Posterior cingulate gyrus (tissue), 11 donors: ENCODE measurements at regions of chr4 and their contacts with region 1.

Region 1: DNA sequence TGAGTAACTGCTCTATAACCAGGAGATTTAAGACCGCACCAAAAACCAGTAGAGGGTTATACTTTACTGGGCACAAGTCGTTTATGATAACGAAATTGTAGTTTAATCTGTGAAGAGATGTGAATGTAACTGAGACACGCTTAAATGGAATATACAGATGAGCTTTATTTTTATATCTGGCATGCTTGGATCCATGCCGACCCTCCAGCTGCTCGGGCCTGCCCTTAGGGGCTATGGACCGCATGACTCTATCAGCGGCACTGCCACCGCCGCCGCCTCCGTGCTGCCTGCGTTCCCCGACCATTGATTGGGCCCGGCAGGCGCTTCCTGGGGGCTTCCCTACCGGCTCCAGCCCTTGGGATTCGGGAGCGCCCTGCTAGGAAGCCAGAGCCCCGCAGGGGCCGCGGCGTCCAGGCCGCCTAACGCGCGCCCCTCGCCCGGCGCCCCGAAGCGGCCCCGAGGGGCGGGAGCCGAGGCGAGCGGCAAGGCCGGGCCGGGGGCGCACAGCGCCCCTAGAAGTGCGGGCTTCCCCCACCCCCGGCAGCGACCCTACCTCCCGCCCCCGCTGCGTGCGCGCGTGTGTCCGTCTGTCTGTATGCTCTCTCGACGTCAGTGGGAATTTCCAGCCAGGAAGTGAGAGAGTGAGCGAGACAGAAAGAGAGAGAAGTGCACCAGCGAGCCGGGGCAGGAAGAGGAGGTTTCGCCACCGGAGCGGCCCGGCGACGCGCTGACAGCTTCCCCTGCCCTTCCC is at the start of gene NFKB1:
- DNase-seq: peak in 9 of 10 donors; percentile 23 to 88 (median 58)

Region 2: GRCh38 chr4:102169345-102169744 is 331.5 kb before region 1 on chr4:
- intact Hi-C with region 1: no loop called
- DNase-seq: peak in 3 of 10 donors; percentile 17 to 87 (median 30)

Region 3: DNA sequence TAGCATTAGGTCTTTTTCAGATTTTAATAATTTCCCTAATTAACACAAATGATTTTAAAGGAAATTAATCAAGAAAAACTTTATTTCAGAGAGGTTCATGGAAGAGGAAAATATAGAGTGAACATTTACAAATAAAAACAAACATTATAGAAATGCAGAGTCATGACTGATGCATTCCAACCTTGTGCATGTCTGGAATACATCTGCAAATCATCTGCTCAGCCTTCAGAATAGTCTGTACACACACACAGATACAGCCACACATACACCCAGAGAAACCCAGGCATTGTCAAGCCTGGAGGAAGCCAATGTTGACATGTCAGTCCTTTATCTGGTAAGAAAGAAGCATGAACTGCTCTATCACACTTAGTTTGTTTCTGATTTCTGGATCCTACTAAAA is 61.1 kb before region 1 on chr4:
- intact Hi-C with region 1: no loop called
- DNase-seq: no peak

Region 4: DNA sequence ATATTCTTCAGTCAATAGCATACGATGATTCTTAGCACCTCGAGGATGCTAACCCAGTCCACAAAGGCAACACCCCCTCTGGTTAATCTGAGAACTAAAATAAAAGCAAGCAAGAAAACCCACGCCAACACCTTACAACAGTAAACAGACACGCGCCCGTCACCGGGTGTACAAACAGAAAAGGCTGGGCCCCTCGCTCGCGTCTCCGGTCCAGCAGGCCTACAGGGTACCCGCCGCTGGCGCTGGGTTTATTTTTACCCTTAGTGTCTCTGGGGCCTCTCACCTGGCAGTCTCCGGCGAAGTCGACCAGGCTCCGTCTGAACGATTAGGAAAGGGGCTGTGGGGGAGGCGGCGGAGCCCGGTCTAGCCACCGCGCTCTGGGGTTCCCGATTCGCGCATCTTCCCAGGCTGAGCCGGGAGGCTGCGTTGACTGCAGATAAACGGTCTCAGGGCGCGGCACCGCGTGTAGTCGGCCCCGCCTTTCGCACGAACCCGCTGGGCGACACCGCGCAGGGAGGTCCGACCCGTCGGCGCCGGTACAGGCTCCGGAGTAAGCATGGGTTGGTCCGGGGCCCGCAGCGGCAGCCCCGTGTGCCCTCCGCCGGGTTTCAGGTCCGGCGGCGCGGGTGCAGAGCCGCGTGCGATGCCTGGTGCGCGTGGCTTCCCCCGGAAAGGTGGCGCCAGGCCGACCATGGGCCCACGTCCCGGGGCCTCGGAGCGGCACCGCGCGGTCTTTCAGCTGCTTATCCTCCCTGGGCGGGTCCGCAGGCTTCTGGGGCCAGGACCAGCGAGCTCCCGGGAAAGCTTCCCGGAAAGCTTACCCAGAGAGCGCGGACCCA is 575.2 kb after region 1 on chr4:
- intact Hi-C with region 1: loop called (anchors 5 kb)
- DNase-seq: peak; percentile 42 to 94 (median 64)